ENCODE measurements at regions of chr14 and their contacts with region 1.

Region 1: GRCh38 chr14:24678801-24679247 is 44.8 kb upstream of the GZMB start:
- DNase-seq: peak; percentile 71
- CTCF ChIP-seq: peak; percentile 99

Region 2: DNA sequence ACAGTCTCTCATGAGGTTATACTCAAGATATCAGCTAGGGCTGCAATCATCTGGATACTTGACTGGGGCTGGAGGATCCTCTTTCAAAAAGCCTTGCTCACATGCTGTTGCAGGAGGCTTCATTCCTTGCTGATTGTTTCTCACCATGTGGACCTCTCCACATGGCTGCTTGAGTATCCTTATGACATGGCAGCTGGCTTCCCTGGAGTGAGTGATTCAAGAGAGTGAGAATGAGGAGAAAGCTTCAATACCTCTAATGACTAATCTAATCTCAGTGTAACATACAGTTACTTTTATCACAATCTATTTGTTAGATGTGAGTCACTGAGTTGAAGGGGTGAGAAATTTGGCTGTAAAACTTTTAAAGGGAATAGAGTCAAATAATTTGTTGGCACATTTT is 221.8 kb before region 1 on chr14:
- in situ Hi-C with region 1: loop called (anchors 25 kb)
- DNase-seq: no peak
- CTCF ChIP-seq: no peak

Region 3: GRCh38 chr14:24605435-24606190 is 73.2 kb before region 1 on chr14:
- in situ Hi-C with region 1: loop called (anchors 10 kb)
- DNase-seq: peak; percentile 77
- CTCF ChIP-seq: peak; percentile 92

Measured in GM13977 (cell line).